ENCODE measurements at regions of chr9 and their contacts with region 1.

Region 1: DNA sequence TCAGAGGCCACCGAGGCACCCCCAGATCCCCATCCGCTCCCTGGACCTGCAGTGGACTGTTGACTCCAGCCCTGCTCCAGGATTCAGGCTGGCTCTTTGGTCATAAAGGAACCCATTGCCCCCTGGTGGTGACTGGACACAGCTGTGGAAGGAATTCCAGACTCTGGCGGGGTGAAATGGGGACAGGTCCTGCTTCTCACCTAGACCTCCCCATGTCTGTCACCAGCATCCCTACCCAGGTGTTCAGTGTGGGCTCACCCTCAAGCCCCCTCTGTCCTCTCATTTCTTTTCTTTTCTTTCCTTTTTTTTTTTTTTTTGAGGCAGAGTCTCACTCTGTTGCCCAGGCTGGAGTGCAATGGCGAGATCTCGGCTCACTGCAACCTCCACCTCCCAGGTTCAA is 25.5 kb upstream of the STXBP1 start:
- DNase-seq: peak in 2 of 3 donors; percentile 76 to 94
- ATAC-seq: peak; percentile 81
- H3K4me3 ChIP-seq: no peak overlapping the region
- H3K4me1 ChIP-seq: peaks cover 16% of the 10 kb centered on the region
- CTCF ChIP-seq: peak; percentile 63

Region 2: DNA sequence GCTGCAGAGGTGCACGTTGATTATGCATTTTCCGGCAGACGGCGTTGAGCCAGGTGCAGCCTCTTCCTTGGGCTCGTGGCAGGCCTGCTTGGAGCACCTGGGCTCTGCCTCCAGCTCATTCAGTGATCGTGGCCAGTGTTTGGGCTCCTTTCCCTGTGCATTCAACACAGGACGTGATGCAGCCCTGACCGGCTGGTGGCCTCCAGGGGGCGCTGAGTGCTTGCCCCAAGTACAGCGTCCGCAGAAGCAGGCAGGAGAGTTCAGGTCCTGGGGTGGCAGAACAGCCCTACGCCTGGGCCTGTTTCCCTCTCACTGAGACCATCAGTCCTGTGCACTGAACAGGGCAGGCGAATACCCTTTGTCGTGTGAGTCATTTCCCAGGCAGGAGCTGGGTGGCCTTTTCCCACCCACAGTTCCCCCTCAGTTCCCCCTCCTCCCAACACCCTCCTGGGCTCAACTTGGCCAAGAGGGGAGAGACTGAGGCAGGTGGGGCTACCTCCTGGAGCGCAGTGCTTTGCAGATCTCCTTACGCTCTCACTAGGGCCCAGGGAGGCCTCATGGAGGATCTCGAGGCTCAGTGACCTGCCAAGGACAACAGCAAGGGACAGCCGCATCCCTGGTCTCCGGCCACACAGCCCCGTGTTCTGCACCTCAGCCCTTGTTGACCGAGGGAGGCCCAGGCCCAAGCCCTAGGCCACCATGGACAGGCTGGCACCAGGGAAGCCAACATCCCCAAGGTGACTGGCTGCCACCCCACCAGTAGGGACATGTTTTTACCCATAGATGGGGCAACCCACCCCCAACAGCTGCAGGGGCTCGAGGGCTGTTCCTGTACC is 82.4 kb before region 1 on chr9:
- intact Hi-C with region 1: loop called (anchors 5 kb)
- DNase-seq: peak; percentile 84 to 93 (median 89)
- ATAC-seq: peak; percentile 89
- H3K4me3 ChIP-seq: no peak overlapping the region
- H3K4me1 ChIP-seq: no peaks in the 10 kb centered on the region
- CTCF ChIP-seq: peak; percentile 85

Region 3: DNA sequence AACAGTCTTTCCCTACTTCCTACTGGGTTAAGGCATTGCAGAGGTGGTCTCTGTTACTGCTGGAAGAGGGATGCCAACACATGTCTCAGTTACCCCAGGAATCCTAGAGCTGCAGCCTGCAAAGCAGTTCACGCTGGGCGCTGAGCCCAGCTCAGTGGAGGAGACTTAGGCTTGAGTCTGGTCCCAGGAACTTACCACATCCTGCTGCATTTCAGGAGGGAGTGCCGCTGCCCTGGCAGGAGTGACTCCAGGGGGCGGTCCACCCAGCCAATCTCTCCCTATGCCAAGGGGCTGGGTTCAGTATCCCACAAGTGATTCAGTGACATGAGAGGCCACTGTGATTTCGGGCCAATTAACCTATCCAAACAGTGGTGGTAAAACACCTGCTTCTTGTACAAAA is 136.9 kb after region 1 on chr9:
- intact Hi-C with region 1: loop called in 1 of 2 experiments (anchors 10 kb)
- DNase-seq: peak in 1 of 3 donors; percentile 38
- ATAC-seq: peak; percentile 65
- H3K4me3 ChIP-seq: no peak overlapping the region
- H3K4me1 ChIP-seq: peaks cover 10% of the 10 kb centered on the region
- CTCF ChIP-seq: no peak

Region 4: DNA sequence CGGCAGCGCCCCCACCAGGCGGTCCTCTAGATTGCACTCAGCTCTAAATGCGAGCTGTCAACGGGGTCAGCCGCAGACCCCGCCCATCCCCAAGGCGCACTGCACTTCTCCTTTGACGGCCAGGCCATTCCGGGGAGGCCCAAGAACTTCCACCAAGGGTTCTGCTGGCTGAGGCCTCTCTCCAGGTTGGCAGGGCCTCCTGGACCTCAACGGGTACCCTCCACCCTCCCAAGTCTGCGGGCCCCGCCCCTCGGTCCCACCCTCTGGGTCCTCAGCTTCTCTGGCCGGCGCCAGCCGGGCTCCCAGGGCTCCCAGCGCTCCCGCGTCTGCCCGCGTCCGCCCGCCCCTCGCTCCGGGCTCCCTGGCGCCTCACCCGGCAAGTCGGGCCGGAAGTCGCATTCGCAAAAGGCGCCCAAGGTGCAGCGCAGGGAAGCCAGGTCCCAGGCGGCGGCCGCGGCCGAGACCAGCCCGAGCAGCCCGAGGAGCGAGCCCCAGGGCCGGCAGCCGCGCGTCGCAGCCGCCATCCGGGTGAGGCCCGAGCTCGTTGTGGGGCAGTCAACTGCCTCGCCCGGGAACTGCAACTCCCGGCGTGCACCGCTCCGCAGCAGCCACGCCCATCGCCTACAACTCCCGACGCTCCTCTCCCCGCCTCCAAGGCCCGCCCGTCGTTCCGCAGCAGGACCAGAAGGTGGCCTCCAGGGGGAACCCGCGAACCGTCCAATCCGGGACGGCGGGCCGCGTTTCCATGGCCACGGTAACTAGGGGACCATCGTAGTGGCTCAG is 148.4 kb after region 1 on chr9 and contains the start of gene TOR2A:
- intact Hi-C with region 1: loop called in 1 of 2 experiments (anchors 2 kb)
- DNase-seq: peak; percentile 97 to 98 (median 98)
- ATAC-seq: peak; percentile 97
- H3K4me3 ChIP-seq: peak within 1 kb of the TSS; percentile 60
- H3K4me1 ChIP-seq: peaks cover 11% of the 10 kb centered on the region
- CTCF ChIP-seq: peak; percentile 96
- total RNA-seq, gene TOR2A: 19.7 to 30.2 (median 28.2) TPM

Region 5: DNA sequence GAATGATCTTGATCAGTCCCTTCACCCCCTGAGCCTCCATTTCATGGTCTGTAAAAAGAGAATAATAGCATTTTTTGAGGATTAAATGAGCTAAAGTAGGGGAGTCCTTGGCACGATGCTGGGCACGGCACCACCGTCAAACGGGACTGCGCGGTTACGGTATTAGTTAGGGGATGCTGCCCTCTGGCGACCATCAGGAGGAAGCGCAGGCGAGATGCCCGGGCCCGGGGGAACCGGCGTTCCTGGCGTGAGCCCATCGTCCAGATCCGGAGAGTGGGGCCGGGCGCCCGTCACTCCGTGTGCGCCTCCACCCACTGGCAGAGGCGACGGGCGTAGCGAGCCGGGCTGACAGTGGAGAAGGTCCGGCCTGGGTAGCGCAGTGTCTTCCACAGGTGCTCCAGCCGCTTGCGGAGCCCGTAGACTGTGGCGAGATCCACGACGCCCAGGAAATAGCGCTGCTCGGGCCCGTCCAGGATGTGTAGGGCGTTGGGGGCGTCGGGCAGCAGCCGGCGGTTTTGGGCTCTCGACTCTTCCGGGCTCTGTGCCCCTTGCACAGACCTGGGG is 335.1 kb after region 1 on chr9:
- intact Hi-C with region 1: loop called (anchors 5 to 10 kb)
- DNase-seq: peak; percentile 78 to 83 (median 78)
- ATAC-seq: peak; percentile 52
- H3K4me3 ChIP-seq: no peak overlapping the region
- H3K4me1 ChIP-seq: peaks cover 26% of the 10 kb centered on the region
- CTCF ChIP-seq: peak; percentile 96